Activated naive CD4-positive, alpha-beta T cell treated with anti-CD3 and anti-CD28 coated beads for 36 hours (primary cell): ENCODE measurements at regions of chr16 and their contacts with region 1.

Region 1: GRCh38 chr16:81314603-81315270 is at the start of gene GAN:
- DNase-seq: peak; percentile 97
- H3K4me3 Mint-ChIP-seq: peak within 1 kb of the TSS; percentile 97
- H3K27ac Mint-ChIP-seq: peak within 1 kb of the TSS; percentile 83
- H3K4me1 Mint-ChIP-seq: peaks cover 65% of the 10 kb centered on the region
- H3K27me3 Mint-ChIP-seq: no peaks in the 10 kb centered on the region
- total RNA-seq, gene GAN: 10.6 to 11.3 TPM

Region 2: DNA sequence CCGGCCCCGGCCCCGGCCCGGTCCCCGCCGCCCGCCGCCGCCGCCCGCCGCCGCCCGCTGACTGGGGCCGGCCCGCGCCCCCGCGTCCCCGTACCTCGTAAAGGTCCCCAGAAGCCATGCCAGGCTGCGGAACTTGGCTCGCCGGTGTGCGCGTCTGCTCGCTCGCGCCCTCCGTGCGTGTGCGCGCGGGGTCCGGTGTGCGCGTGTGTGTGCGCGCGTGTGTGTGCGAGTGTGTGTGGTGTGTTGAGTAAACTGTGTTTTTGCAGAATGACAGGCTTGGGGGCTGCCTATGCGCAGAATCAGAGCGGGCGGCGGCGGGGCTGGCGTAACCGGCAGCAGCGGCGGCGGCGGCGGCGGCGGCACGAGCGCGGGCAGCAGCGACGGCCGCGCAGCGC is 510.7 kb before region 1 on chr16:
- CTCF ChIA-PET with region 1: no interaction called
- intact Hi-C with region 1: loop called (anchors 10 kb)
- DNase-seq: peak; percentile 63
- H3K4me3 Mint-ChIP-seq: peak overlapping the region; percentile 88
- H3K27ac Mint-ChIP-seq: peak overlapping the region; percentile 80
- H3K4me1 Mint-ChIP-seq: peaks cover 31% of the 10 kb centered on the region
- H3K27me3 Mint-ChIP-seq: peaks cover 4% of the 10 kb centered on the region

Region 3: GRCh38 chr16:81077076-81077940 is 237.4 kb before region 1 on chr16 and contains the start of gene C16orf46:
- CTCF ChIA-PET with region 1: no interaction called
- intact Hi-C with region 1: loop called (anchors 1 kb)
- DNase-seq: peak; percentile 99
- H3K4me3 Mint-ChIP-seq: no peak within 1 kb of the TSS
- H3K27ac Mint-ChIP-seq: no peak within 1 kb of the TSS
- H3K4me1 Mint-ChIP-seq: peaks cover 4% of the 10 kb centered on the region
- H3K27me3 Mint-ChIP-seq: no peaks in the 10 kb centered on the region
- total RNA-seq, gene C16orf46: 0.74 TPM in 1 of 2 experiments, not detected in the other

Region 4: GRCh38 chr16:81261049-81261648 is 53.6 kb before region 1 on chr16:
- CTCF ChIA-PET with region 1: interaction called, 14 read pairs
- intact Hi-C with region 1: loop called (anchors 2 kb)
- DNase-seq: peak; percentile 45
- H3K4me3 Mint-ChIP-seq: no peak overlapping the region
- H3K27ac Mint-ChIP-seq: no peak overlapping the region
- H3K4me1 Mint-ChIP-seq: no peaks in the 10 kb centered on the region
- H3K27me3 Mint-ChIP-seq: no peaks in the 10 kb centered on the region

Region 5: GRCh38 chr16:81616321-81617055 is 301.8 kb after region 1 on chr16:
- CTCF ChIA-PET with region 1: no interaction called
- intact Hi-C with region 1: loop called (anchors 5 kb)
- DNase-seq: peak; percentile 90
- H3K4me3 Mint-ChIP-seq: peak overlapping the region; percentile 20
- H3K27ac Mint-ChIP-seq: peak overlapping the region; percentile 83
- H3K4me1 Mint-ChIP-seq: peaks cover 16% of the 10 kb centered on the region
- H3K27me3 Mint-ChIP-seq: no peaks in the 10 kb centered on the region

Region 6: DNA sequence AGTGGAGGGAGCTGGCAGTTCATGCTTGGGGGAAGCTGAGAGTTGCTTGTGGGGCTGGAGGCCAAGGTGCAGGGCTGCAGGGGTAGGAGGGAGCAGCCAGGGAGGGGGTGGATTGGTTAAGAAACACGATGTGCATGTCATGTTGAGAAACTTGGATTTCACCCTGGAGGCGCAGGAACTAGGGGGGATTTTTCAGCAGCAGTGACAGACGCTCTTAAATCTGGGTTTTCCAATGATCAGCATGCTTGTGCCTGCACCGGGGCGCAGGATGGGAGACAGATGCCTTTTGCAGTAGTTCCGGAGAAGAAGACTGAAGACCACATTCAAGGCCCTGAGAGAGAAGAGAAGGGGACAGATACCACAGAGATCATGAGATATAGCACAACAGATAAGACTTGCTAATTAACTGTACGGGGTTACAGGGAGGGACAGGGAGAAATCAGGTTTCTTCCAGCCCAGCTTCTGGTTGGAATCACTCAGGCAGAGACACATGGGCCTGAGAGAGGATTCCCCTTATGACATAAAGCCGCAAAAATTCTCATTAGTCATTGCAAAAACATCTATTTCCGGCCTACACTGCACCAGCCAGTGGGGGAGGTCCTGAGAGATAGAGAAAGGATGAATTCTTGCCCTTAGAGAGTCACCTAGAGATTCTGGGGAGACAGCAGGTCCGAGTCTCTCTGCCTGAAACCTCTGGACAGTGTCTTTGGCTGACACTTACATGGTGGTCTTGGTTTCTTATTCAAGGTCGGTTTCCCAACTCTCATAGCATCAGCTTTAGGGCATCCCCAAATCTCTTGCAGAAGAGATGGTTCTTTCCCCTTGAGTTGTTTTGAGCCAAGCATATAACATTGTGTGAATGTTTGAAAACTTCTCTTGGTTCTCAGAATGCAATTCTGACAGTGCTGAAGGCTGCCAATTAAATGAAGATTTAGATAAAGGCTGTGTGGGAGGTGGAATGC is 1339.1 kb after region 1 on chr16:
- CTCF ChIA-PET with region 1: no interaction called
- intact Hi-C with region 1: loop called (anchors 5 kb)
- DNase-seq: peak; percentile 67
- H3K4me3 Mint-ChIP-seq: peak overlapping the region; percentile 38
- H3K27ac Mint-ChIP-seq: peak overlapping the region; percentile 88
- H3K4me1 Mint-ChIP-seq: peaks cover 66% of the 10 kb centered on the region
- H3K27me3 Mint-ChIP-seq: no peaks in the 10 kb centered on the region